ENCODE measurements at regions of chr11 and their contacts with region 1.

Region 1: DNA sequence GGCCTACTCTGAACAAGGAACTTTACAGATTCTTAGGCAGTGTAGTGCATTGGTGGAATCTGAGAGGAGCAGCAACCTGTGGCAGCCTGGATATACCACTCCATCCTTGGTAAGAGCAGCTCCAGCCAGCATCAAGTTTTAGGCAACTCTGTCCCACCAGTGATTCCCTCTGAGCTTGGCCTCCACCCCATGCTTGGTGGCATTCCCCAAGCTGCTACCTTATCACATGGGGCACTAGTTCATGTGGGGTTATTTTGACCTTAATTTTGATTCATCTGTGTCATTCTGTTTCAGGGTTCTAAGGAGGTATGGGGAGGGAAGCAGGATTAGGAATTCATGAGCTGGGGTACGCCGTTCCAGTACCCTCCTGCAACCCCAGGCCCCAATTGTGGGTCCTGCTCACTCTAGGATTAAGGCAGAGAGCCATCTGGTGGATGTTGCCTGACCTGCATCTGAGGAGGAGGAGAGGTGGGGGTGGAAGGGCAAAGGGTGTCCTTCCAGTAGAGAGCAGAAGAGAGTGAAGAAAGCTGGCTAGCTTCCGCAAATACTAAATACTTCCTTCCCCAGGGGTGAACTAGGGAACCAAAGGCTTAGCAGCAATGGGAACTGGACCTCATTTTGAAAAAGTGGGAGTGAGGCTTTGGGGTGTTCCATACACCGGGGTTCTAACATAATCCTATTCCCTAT is 10.5 kb downstream of the LRRC51 start:
- DNase-seq: peak; percentile 85
- ATAC-seq: peak; percentile 98
- H3K4me3 Mint-ChIP-seq: no peak overlapping the region
- H3K27ac Mint-ChIP-seq: peak overlapping the region; percentile 75; the same call in 1 of the 2 replicates
- H3K4me1 Mint-ChIP-seq: peaks cover 13% of the 10 kb centered on the region
- H3K27me3 Mint-ChIP-seq: no peaks in the 10 kb centered on the region
- CTCF ChIP-seq: peak; percentile 49; the same call in 1 of the 2 replicates

Region 2: GRCh38 chr11:72015511-72016171 is 75.5 kb before region 1 on chr11:
- CTCF ChIA-PET with region 1: interaction called, 14 read pairs
- POLR2A ChIA-PET with region 1: no interaction called
- DNase-seq: peak; percentile 63
- ATAC-seq: peak; percentile 62
- H3K4me3 Mint-ChIP-seq: no peak overlapping the region
- H3K27ac Mint-ChIP-seq: no peak overlapping the region
- H3K4me1 Mint-ChIP-seq: no peaks in the 10 kb centered on the region
- H3K27me3 Mint-ChIP-seq: no peaks in the 10 kb centered on the region
- CTCF ChIP-seq: 0 out of 2 replicates have a peak, but pooled peaks have one; percentile 25

Region 3: DNA sequence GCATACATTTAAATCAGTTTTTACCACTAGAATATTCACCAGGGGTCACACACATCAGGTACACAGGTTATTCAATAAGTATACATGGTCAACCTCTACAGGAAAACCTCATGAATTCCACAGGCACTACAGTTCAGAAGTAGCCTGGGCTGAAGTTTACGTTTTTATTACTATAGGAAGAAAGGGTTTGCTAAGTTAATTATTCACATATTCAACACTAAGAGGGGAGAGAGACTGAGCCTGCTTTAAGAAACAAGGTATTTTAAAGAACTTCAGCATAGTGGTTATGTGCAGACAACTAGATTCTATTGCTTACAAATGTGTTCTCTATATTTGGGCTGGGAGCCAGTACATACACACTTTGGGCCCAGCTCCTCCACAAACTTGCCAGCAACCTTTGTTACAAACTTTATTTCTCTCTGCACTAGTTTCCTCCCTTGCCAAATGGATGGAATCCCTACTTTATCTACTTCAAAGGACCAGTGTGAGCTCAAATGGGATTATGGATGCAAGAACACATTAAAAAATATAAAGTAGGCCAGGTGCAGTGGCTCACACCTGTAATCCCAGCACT is 60.6 kb before region 1 on chr11:
- CTCF ChIA-PET with region 1: interaction called, 235 read pairs
- POLR2A ChIA-PET with region 1: interaction called, 12 read pairs
- DNase-seq: no peak
- ATAC-seq: no peak
- H3K4me3 Mint-ChIP-seq: no peak overlapping the region
- H3K27ac Mint-ChIP-seq: no peak overlapping the region
- H3K4me1 Mint-ChIP-seq: peaks cover 2% of the 10 kb centered on the region; the same call in 1 of the 2 replicates
- H3K27me3 Mint-ChIP-seq: no peaks in the 10 kb centered on the region
- CTCF ChIP-seq: no peak

Region 4: DNA sequence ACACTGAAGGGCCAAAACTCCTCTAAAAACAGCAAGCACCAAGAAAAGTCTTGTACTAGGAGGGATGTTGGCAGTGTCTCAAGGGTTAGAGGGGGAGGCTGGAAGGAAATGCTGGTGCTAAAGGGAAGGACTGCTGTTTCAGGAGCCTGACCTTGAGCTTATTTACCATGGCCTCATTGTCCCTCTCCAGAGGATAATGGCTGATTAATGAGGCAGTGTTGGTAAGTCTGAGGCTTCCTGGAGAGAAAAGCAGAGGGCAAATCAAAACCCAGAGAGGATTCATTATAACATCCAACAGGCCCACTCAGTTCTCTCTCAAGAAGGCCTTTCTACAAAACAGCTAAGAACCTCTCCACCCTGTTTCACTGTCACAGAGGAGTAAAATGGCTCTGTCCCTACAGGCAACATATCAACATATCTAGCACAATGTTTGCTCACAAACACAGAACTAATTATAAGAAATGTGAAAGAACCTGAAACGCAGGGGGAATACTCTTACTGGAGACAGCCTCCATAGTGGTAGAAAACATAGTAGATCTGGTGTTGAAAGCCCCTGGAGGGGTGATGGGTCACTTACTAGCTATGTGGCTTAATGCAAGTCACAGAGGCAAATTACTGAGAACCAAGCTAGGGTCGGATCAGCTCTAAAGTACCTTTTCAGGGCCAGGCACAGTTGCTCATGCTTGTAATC is 42.2 kb before region 1 on chr11:
- CTCF ChIA-PET with region 1: interaction called, 10 read pairs
- POLR2A ChIA-PET with region 1: no interaction called
- DNase-seq: no peak
- ATAC-seq: peak; percentile 86
- H3K4me3 Mint-ChIP-seq: no peak overlapping the region; the same call in 1 of the 2 replicates
- H3K27ac Mint-ChIP-seq: peak overlapping the region; percentile 90
- H3K4me1 Mint-ChIP-seq: peaks cover 28% of the 10 kb centered on the region
- H3K27me3 Mint-ChIP-seq: no peaks in the 10 kb centered on the region
- CTCF ChIP-seq: no peak

Region 5: GRCh38 chr11:72075109-72075508 is 16.0 kb before region 1 on chr11:
- CTCF ChIA-PET with region 1: interaction called, 26 read pairs
- POLR2A ChIA-PET with region 1: no interaction called
- DNase-seq: no peak
- ATAC-seq: peak; percentile 67
- H3K4me3 Mint-ChIP-seq: no peak overlapping the region
- H3K27ac Mint-ChIP-seq: peak overlapping the region; percentile 55
- H3K4me1 Mint-ChIP-seq: peaks cover 42% of the 10 kb centered on the region
- H3K27me3 Mint-ChIP-seq: no peaks in the 10 kb centered on the region
- CTCF ChIP-seq: no peak

Region 6: DNA sequence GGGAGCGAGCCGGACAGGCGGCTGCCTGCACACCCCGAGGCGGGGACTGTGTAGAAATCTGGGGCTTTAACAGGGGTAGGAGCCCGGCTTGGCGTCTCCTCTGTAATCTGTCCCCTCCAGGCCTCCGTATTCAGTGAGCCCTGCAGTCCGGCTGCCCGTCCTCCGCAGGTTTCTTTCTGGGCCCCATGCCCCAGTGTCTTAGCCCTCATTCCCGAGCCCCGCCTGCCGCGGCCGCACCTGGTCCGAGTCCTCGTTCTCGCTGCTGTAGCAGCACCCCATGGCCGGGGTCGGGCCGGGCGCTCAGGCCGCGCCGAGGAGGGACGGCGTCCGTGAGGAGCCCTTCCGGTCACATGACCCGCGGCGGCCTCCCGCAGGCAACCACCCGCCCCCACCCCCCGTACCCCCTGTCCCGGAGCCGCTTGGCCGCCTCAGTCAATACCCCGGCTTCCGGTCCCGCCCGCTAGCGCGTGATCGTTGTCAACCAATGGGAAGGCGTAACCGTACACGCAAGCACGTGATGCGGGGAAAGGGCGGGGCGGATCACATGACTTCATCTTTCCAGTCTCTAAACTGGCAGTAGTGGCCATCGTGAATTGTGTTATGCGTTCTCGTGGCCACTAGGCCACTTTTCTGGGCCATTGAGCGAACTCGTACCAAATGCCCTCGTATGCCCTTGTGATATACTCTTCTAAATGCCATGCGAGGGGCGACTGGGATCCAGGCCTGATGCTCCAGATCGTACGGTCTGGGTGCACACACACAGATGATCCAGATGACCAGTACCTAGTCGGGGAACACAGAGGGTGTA is 12.0 kb after region 1 on chr11 and contains the start of gene LAMTOR1:
- CTCF ChIA-PET with region 1: interaction called, 18 read pairs
- POLR2A ChIA-PET with region 1: no interaction called
- DNase-seq: peak; percentile 99
- ATAC-seq: peak; percentile 93
- H3K4me3 Mint-ChIP-seq: peak within 1 kb of the TSS; percentile 95
- H3K27ac Mint-ChIP-seq: peak within 1 kb of the TSS; percentile 98
- H3K4me1 Mint-ChIP-seq: peaks cover 27% of the 10 kb centered on the region
- H3K27me3 Mint-ChIP-seq: no peaks in the 10 kb centered on the region
- CTCF ChIP-seq: no peak
- total RNA-seq, gene LAMTOR1: 79.4 to 84.3 TPM (median 80.4 TPM) in 3 replicates

Region 7: DNA sequence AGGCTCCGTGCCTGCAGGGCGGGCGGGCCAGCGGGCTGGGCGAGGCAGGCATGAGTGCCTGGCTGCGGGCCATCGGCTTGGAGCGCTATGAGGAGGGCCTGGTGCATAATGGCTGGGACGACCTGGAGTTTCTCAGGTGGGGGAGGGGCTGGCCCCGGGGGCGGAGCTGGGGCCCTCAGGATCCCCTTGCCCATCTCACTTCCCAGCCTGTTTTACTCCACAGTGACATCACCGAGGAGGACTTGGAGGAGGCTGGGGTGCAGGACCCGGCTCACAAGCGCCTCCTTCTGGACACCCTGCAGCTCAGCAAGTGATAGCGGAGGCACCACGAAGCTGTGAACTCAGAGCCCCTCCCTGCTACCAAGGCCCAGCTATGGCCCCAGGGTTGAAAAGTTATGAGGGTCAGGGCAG is 146.9 kb after region 1 on chr11:
- CTCF ChIA-PET with region 1: interaction called, 20 read pairs
- POLR2A ChIA-PET with region 1: no interaction called
- DNase-seq: peak; percentile 94
- ATAC-seq: peak; percentile 81
- H3K4me3 Mint-ChIP-seq: peak overlapping the region; percentile 73
- H3K27ac Mint-ChIP-seq: no peak overlapping the region
- H3K4me1 Mint-ChIP-seq: peaks cover 31% of the 10 kb centered on the region
- H3K27me3 Mint-ChIP-seq: peaks cover 46% of the 10 kb centered on the region
- CTCF ChIP-seq: peak; percentile 84

Region 8: GRCh38 chr11:72511393-72512047 is 420.4 kb after region 1 on chr11:
- CTCF ChIA-PET with region 1: no interaction called
- POLR2A ChIA-PET with region 1: no interaction called
- DNase-seq: no peak
- ATAC-seq: no peak
- H3K4me3 Mint-ChIP-seq: no peak overlapping the region
- H3K27ac Mint-ChIP-seq: no peak overlapping the region
- H3K4me1 Mint-ChIP-seq: peaks cover 9% of the 10 kb centered on the region
- H3K27me3 Mint-ChIP-seq: peaks cover 25% of the 10 kb centered on the region
- CTCF ChIP-seq: no peak

Measured in WTC11 (cell line).